B cell (primary cell): ENCODE measurements at regions of chr16 and their contacts with region 1.

Region 1: DNA sequence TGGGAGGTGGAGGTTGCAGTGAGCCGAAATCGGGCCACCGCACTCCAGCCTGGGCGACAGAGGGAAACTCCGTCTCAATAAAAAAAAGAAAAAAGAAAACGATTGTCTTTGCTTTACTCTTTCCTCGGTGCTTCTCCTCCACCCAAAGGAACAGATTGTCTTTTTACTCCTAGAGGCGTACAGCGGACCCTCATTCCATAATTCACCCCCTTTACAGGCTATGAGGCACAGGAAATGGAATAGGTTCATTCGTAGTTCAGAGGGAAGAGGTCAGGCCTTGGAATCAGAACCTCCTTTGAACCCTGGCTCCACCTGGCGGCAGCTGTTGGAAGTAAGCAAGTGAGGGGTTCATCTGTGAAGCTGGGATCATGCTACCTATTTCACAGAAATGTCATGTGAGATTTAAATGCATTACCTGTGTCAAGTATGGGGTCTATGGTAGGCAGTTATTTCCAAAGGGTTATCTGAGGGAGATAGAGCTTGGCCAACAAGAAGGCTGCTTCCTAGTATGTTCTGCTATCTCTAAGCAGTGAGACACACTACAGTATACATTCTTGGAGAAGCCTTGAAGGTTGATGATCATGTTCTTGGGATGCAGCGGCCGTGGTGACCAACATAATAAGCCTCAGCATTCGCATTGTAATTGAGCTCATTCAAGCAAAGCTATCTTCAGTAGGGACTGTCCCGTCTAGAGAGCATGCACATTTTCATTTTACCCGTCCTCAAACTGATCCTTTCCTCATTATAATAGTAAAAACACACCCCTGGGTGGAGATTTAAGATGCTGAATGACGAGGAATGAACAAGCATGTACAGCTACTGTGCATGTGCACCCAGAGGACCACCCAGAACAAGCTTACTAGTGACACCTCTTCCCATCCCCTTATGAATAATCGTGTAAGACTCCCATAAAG is 18.7 kb upstream of the ZNF689 start:
- DNase-seq: peak; percentile 85
- ATAC-seq: peak; percentile 93
- H3K4me3 ChIP-seq: peak overlapping the region in 3 of 5 experiments; percentile 8 to 37 (median 28)
- H3K4me3 Mint-ChIP-seq: peak overlapping the region; percentile 68
- H3K27ac ChIP-seq: no peak overlapping the region
- H3K27ac Mint-ChIP-seq: peak overlapping the region; percentile 78
- H3K4me1 ChIP-seq: peaks cover 0 to 15% of the 10 kb centered on the region in 2 donors
- H3K4me1 Mint-ChIP-seq: peaks cover 8% of the 10 kb centered on the region
- H3K27me3 ChIP-seq: no peaks in the 10 kb centered on the region
- H3K27me3 Mint-ChIP-seq: peaks cover 1% of the 10 kb centered on the region
- CTCF ChIP-seq: peak; percentile 95

Region 2: GRCh38 chr16:29815793-29816693 is 812.8 kb before region 1 on chr16 and contains the start of gene PAGR1:
- CTCF ChIA-PET with region 1: no interaction called
- POLR2A ChIA-PET with region 1: interaction called, 10 read pairs
- intact Hi-C with region 1: no loop called
- DNase-seq: peak; percentile 100
- ATAC-seq: peak; percentile 76
- H3K4me3 ChIP-seq: peak within 1 kb of the TSS; percentile 73 to 93 (median 84)
- H3K4me3 Mint-ChIP-seq: peak within 1 kb of the TSS; percentile 97
- H3K27ac ChIP-seq: peak within 1 kb of the TSS; percentile 88
- H3K27ac Mint-ChIP-seq: peak within 1 kb of the TSS; percentile 98
- H3K4me1 ChIP-seq: peaks cover 40 to 60% of the 10 kb centered on the region in 2 donors
- H3K4me1 Mint-ChIP-seq: peaks cover 65% of the 10 kb centered on the region
- H3K27me3 ChIP-seq: peaks cover 0 to 13% (median 5%) of the 10 kb centered on the region in 4 experiments
- H3K27me3 Mint-ChIP-seq: no peaks in the 10 kb centered on the region
- CTCF ChIP-seq: peak; percentile 97
- total RNA-seq, gene PAGR1: 26.7 and 28.4 TPM in 2 replicates

Region 3: GRCh38 chr16:30445408-30446202 is 183.3 kb before region 1 on chr16 and contains the start of gene SEPHS2:
- CTCF ChIA-PET with region 1: interaction called, 10 read pairs
- POLR2A ChIA-PET with region 1: no interaction called
- intact Hi-C with region 1: no loop called
- DNase-seq: peak; percentile 96
- ATAC-seq: peak; percentile 96
- H3K4me3 ChIP-seq: peak within 1 kb of the TSS; percentile 74 to 99 (median 78)
- H3K4me3 Mint-ChIP-seq: peak within 1 kb of the TSS; percentile 96
- H3K27ac ChIP-seq: peak within 1 kb of the TSS; percentile 78 to 85
- H3K27ac Mint-ChIP-seq: peak within 1 kb of the TSS; percentile 97
- H3K4me1 ChIP-seq: peaks cover 29 to 36% of the 10 kb centered on the region in 2 donors
- H3K4me1 Mint-ChIP-seq: peaks cover 42% of the 10 kb centered on the region
- H3K27me3 ChIP-seq: no peaks in the 10 kb centered on the region
- H3K27me3 Mint-ChIP-seq: no peaks in the 10 kb centered on the region
- CTCF ChIP-seq: peak; percentile 47
- total RNA-seq, gene SEPHS2: 62.2 and 63.2 TPM in 2 replicates

Region 4: DNA sequence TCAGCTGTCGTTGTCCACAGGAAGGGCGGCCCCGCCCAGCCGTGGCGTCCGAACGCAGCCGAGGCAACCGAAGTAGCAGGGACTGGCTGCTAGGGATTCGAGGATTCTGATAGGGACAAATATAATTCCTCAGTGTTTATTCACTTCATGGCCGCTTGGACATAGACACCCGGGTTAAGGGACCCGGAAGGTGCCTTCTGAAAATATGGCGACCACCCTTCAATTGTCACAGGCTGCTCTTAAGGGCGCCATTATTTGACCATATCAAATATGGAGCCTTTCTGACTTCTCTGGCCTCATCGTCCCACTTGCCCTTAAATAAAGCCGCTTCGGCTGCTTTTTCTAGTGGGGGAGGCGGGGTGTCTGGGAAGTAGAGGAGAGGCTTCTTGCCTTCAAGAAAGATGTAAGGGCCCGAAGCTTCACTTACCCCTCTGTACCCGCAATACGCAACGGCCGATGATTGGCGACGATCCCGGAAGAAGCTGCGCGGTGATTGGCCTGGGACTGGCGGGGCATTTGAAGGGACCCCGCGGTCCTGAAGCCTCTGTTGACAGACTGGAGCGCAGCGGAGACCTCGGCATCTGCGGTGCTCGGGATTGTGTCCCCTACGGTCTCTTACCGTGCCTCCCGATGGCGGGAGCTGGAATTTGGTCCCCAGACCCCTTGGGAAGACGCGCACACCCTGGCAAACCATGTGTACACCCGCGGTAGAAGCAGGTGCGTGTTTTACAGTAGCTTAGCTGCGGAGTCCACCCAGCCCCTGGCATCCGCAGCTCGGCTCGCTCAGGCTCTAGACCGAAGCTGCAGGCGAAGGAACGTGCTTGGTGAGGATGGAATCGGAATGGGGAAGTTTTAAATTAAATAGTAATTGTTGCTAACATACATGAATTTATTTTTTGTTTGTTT is 56.9 kb before region 1 on chr16 and contains the start of gene ZNF688:
- CTCF ChIA-PET with region 1: interaction called, 3 read pairs
- POLR2A ChIA-PET with region 1: no interaction called
- intact Hi-C with region 1: loop called (anchors 1 kb)
- DNase-seq: peak; percentile 97
- ATAC-seq: peak; percentile 86
- H3K4me3 ChIP-seq: peak within 1 kb of the TSS; percentile 72 to 89 (median 86)
- H3K4me3 Mint-ChIP-seq: peak within 1 kb of the TSS; percentile 91
- H3K27ac ChIP-seq: peak within 1 kb of the TSS; percentile 96 to 97
- H3K27ac Mint-ChIP-seq: peak within 1 kb of the TSS; percentile 99
- H3K4me1 ChIP-seq: peaks cover 29 to 43% of the 10 kb centered on the region in 2 donors
- H3K4me1 Mint-ChIP-seq: peaks cover 40% of the 10 kb centered on the region
- H3K27me3 ChIP-seq: no peaks in the 10 kb centered on the region
- H3K27me3 Mint-ChIP-seq: no peaks in the 10 kb centered on the region
- CTCF ChIP-seq: no peak
- total RNA-seq, gene ZNF688: 23.1 and 24.9 TPM in 2 replicates

Region 5: DNA sequence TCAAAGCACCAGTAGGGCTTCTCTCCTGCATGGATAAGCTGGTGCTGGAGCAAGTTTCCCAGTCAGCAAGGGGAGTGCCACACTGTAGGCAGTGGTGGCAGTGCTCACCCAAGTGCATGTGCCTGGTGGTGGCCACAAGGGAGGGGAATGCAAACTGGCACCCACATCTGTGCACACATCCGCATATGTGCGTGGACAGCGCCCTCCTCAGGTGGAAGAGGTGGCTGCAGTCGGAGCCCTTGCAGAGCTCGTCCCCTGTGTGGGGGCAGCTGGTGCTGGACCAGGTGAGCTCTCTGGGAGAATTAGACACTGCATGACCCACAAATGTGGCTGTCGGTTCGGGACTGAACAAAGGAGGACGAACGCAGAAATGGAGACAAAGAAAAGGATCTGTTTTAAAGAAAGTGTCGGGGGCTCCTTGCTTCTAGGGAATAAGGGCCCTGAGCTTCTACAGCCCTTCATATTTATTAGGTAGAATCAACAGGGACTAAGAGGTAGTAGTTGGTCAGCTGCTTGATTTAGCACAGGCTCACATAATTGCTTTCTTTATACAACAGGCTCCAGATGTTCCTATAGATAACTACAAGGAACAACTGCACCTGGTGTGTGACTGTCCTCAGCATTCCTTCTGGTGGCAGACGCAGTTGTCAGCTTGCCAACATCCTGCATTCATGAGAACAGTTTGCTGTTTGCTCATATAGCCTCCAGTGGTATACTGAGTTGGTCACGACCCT is 13.4 kb before region 1 on chr16:
- CTCF ChIA-PET with region 1: interaction called, 17 read pairs
- POLR2A ChIA-PET with region 1: interaction called, 5 read pairs
- intact Hi-C with region 1: loop called (anchors 1 kb)
- DNase-seq: peak; percentile 68
- ATAC-seq: peak; percentile 64
- H3K4me3 ChIP-seq: no peak overlapping the region
- H3K4me3 Mint-ChIP-seq: no peak overlapping the region
- H3K27ac ChIP-seq: no peak overlapping the region
- H3K27ac Mint-ChIP-seq: no peak overlapping the region
- H3K4me1 ChIP-seq: peaks cover 5 to 12% of the 10 kb centered on the region in 2 donors
- H3K4me1 Mint-ChIP-seq: peaks cover 9% of the 10 kb centered on the region
- H3K27me3 ChIP-seq: no peaks in the 10 kb centered on the region
- H3K27me3 Mint-ChIP-seq: peaks cover 6% of the 10 kb centered on the region
- CTCF ChIP-seq: peak; percentile 73

Region 6: GRCh38 chr16:30747799-30748634 is 119.1 kb after region 1 on chr16 and contains the start of gene PHKG2:
- CTCF ChIA-PET with region 1: no interaction called
- POLR2A ChIA-PET with region 1: no interaction called
- intact Hi-C with region 1: loop called (anchors 1 kb)
- DNase-seq: peak; percentile 98
- ATAC-seq: peak; percentile 99
- H3K4me3 ChIP-seq: peak within 1 kb of the TSS; percentile 22 to 84 (median 69)
- H3K4me3 Mint-ChIP-seq: peak within 1 kb of the TSS; percentile 92
- H3K27ac ChIP-seq: peak within 1 kb of the TSS; percentile 45 to 75
- H3K27ac Mint-ChIP-seq: peak within 1 kb of the TSS; percentile 93
- H3K4me1 ChIP-seq: peaks cover 3 to 5% of the 10 kb centered on the region in 2 donors
- H3K4me1 Mint-ChIP-seq: peaks cover 19% of the 10 kb centered on the region
- H3K27me3 ChIP-seq: no peaks in the 10 kb centered on the region
- H3K27me3 Mint-ChIP-seq: no peaks in the 10 kb centered on the region
- CTCF ChIP-seq: no peak
- total RNA-seq, gene PHKG2: 54.1 and 55.7 TPM in 2 replicates